ENCODE measurements at regions of chr14 and their contacts with region 1.

Region 1: GRCh38 chr14:103920981-103921854 is 7.0 kb upstream of the TDRD9 start:
- DNase-seq: peak; percentile 36
- H3K4me3 ChIP-seq: peak overlapping the region; percentile 73
- CTCF ChIP-seq: peak; percentile 100

Region 2: GRCh38 chr14:103688906-103689902 is 232.0 kb before region 1 on chr14:
- CTCF ChIA-PET with region 1: no interaction called
- POLR2A ChIA-PET with region 1: no interaction called
- DNase-seq: no peak
- H3K4me3 ChIP-seq: no peak overlapping the region
- CTCF ChIP-seq: no peak

Region 3: DNA sequence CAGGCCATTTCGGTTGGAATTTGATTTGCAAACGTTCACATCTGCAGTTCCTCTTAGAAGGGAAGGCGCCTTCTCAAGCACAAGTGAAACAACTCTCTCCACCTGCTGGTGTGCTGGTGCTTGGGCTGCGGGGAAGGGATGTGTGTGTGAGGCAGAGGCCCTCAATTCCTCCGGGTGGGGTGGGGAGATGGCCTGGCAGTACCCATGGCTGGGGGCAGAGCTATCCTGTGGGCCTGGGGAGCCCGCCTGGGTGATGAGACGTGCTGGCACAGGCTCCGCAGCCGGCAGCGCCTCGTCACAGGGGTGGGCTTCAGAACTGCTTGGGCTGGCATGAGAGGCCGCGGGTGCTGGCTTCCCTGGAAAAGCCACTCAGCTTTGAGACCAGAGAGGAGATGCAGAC is 21.9 kb before region 1 on chr14:
- CTCF ChIA-PET with region 1: interaction called, 11 read pairs
- POLR2A ChIA-PET with region 1: no interaction called
- DNase-seq: no peak
- H3K4me3 ChIP-seq: no peak overlapping the region
- CTCF ChIP-seq: no peak

Region 4: GRCh38 chr14:103910262-103910935 is 10.8 kb before region 1 on chr14:
- CTCF ChIA-PET with region 1: interaction called, 82 read pairs
- POLR2A ChIA-PET with region 1: no interaction called
- DNase-seq: peak; percentile 3
- H3K4me3 ChIP-seq: no peak overlapping the region; the same call in 1 of the 2 replicates
- CTCF ChIP-seq: peak; percentile 71

Region 5: GRCh38 chr14:103931422-103931821 is 10.2 kb after region 1 on chr14:
- CTCF ChIA-PET with region 1: interaction called, 16 read pairs
- POLR2A ChIA-PET with region 1: no interaction called
- DNase-seq: no peak
- H3K4me3 ChIP-seq: no peak overlapping the region
- CTCF ChIP-seq: no peak

Region 6: DNA sequence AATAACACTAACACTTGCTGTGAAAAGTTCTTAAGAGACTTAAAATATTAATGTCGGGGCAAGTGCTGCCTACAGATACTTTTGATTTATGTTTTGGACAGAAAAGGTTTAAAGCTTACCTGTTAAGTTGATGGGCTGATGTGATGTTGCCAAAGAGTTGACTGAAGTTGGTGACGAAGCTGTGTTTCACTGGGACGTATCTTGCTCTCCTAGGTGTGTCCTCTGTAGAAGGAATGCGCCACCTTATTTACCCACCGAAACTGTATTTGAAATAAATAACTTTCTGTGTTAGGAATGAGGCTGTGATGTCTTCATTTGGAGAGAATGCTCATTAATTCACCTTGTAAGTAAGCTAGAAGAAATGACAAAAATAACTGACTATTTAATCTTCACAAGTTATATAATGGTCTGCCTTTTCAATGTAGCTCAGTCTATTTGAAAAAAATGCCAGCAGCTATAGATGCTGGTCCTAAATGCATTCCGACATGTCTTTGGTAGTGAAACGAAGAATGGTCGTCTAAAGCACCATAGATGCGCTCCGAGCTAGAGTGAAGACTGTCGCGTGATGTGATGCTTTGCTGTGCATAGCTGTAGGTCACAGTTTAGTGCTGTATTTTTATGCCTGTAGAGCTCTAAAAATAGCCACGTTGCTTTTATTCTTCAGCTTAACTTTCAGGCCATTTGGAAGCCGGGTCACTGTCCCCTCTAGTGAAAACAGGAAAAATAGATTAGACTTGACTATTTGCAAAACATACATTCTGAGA is 20.9 kb after region 1 on chr14 and contains the start of gene RD3L:
- CTCF ChIA-PET with region 1: interaction called, 17 read pairs
- POLR2A ChIA-PET with region 1: no interaction called
- DNase-seq: no peak
- H3K4me3 ChIP-seq: no peak within 1 kb of the TSS
- CTCF ChIP-seq: no peak

Measured in AG04449 (cell line).